ENCODE measurements at regions of chr2 and their contacts with region 1.

Region 1: GRCh38 chr2:12716282-12717190 is at the start of gene TRIB2:
- DNase-seq: peak; percentile 93
- ATAC-seq: peak; percentile 86
- total RNA-seq, gene TRIB2: 33.4 TPM

Region 2: DNA sequence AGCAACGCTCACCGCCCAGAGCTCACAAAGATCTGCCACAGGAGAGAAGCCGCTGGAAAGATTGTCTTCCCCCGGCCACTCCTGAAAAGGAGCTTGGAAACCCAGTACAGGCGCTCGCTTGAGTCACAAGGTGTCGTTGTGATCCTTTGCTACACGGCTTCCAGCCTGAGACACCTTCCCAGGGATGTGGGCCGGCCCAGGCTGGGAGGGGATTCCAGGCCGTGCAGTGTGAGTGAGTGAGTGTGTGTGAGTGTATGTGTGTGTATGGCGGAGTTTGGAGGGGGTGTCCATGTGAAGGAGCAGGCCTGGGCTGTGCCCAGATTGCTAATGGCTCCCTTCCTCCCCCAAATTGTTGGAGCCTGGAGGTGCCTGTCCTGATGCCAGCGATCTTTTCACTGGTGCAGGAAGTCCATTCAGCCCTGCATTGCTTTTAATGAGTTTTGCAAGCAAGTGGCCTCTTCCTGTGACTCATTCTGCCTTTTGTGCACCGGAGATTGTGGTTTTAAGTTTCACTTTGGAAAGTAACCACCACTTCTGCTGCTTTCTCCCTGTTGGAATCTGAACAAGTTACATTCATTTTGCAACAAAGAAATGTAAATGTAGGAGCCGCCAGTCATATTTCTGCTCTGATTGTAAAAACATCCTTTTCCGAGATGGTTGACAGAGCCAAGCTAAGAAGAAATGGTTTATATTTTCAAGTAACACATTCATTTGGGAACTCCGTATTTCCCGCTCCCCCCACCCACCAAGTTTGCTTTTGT is 886.4 kb before region 1 on chr2:
- intact Hi-C with region 1: loop called (anchors 1 kb)
- DNase-seq: peak; percentile 73
- ATAC-seq: peak; percentile 83

Region 3: DNA sequence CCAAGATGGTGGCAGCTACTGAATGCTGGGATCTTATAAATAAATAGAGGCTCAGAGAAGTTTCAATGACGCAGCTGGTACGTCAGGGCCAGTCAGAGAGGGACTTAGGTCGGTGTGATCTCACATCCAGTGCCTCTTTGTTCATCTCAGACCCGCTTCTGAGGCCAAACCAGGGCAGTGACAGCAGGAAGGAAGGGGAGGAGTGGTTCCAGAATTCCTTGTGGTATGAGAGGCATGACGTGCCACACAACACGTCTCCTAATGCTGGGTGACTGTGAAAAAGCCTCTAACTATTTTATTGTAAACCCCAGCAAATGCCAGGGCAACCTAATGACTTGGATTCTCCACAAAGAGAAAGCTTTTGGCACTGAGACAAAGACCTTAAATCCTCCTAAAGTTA is 546.8 kb before region 1 on chr2:
- intact Hi-C with region 1: loop called (anchors 5 kb)
- DNase-seq: no peak
- ATAC-seq: peak; percentile 64

Region 4: DNA sequence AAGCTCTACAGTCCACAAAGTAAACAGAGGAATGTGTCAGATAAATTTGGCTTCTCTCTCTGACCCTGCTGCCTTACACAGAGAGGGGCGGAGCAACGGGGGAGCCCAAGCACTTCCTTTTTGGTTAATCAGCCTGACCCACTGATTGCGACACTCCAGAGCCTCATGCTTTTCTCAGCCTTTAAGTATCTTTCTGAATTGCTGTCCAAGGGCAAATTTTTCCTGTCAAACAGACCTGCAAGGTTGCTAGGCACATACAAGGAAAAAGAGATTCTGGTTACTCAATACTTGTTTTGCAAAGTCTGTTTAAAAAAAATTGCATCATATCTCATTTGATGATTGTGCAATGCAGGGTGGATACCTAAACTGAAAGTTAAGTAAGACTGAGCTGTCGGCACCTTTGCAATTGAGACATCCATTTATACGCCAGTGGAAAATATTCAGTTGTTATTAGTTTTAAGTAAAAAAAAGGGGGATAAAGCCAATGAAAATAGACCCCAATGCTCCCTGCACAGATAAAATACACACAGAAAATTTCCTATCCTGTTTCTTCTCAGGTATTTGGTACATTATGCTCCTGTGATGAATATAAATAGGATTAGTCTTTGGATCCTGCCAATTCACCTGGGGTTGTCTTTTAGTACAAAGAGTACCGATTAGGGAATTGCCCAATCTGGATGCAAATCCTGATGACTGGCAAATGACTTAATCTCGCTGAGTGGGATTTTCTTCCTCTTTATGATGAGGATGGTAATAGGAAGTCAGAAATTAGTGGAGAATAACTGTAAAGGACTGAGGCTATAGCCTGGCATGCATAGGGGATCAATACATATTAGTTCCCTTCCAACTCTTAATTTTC is 260.0 kb before region 1 on chr2:
- intact Hi-C with region 1: loop called (anchors 5 kb)
- DNase-seq: peak; percentile 94
- ATAC-seq: peak; percentile 96

Region 5: DNA sequence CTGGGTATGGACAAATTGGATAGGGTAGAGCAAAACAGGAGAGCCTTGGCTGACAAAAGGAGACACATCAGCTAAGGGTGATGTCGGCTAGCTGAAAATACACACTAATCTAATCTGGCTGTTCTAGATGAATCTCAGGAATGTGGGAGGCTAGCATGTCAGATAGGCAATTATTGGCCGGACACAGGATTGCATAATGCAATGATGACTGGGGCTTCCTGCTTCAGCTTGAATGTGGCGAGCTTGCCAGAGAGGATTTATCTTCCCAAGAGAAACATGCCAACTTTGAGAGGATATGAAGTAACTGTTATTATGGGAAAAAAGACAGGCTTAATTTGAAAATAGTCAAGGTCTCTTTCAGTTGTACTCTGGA is 102.6 kb after region 1 on chr2:
- intact Hi-C with region 1: loop called (anchors 2 kb)
- DNase-seq: no peak
- ATAC-seq: peak; percentile 97

Region 6: GRCh38 chr2:13006829-13007717 is 290.5 kb after region 1 on chr2:
- intact Hi-C with region 1: loop called (anchors 1 kb)
- DNase-seq: no peak
- ATAC-seq: peak; percentile 90